Posterior vena cava (tissue), 2 donors: ENCODE measurements at regions of chr13 and their contacts with region 1.

Region 1: DNA sequence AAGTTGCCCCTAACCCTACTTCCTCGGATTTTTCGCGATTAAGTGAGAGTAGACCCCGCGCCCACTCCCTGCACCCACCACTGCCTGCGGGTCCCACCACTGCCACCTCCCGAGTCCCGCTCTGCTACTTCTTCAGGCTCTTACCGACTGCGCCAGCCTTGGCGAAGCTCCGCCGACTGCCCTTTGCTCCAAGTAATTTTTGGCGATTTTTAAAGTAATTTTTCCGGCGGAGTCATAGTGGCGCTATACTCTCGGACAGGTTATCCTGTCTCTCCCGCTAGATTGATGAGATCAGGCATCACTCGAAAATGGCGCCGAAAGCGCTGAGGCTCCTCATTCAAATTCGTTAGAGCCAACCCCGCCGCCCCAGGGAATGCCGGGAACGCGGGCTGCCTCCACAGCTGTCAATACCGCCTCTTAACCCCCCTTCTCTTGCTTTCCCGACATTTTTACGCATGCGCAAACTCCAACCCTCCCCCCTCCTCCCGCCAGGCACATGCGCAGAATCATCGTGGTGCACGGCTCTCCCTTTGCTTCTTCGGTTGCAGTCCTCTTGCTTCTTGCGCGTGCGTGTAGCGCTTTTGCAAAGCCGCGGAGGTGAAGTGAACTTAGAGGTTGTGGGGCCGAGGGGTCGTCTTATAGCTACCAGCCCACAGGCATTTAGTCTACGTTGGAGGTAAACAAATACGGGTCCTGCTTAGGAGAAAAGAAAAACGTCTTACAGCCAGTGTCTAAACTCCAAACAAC is 66.6 kb downstream of the KCNRG start:
- DNase-seq: peak; percentile 99

Region 2: DNA sequence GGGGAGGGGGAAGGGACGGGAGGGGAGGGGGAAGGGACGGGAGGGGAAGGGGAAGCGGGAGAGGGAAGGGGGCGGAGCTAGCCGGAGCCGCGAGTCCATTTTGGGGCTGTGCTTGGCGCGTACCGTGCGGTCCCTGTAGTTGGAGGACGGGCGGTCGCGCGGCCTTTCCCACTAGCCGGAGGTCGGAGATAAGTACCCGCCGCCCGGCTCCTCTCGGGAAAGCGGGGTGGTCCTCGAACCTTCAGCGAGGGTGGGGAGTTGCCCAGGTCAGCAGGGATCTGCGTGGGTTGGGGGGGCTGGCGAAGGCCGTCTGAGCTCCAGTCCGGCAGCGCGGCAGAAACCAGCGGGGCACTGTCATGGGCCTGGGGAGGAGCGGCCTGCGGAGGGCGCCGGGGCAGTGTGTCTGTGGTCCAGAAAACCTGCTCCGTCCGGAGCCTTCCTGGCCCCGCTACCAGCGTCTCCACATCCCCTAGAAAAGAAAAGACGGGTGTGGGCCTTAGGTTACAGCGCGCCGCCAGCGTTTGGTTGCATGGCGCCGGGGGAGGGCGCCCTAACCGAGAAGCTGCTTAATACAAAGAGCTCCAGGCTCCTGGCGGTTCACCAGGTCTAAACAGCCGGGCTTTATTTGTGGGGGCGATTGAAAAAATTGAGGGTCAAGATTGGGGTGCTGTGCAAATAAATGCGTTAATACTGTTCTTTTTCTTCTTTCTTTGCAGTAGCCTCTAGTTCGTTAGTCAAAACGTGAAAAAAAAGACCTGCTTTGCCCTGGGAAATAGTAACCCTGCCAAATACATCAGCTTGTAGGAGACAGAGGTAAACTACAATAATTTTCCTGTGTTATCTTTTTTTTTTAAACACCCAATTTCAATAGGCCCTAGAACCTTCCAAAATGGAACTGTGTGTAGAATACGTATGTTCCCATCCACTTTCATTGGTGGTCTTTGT is 84.6 kb before region 1 on chr13 and contains the start of gene TRIM13:
- intact Hi-C with region 1: loop called in 1 of 2 experiments (anchors 5 kb)
- DNase-seq: peak; percentile 97
- total RNA-seq, gene TRIM13: 18.0 to 20.9 TPM

Region 3: GRCh38 chr13:50123862-50124536 is 42.1 kb after region 1 on chr13:
- intact Hi-C with region 1: loop called (anchors 5 kb)
- DNase-seq: no peak

Region 4: GRCh38 chr13:50699874-50700663 is 618.2 kb after region 1 on chr13:
- intact Hi-C with region 1: loop called in 1 of 2 experiments (anchors 5 kb)
- DNase-seq: no peak